CD8-positive, alpha-beta T cell (primary cell): ENCODE measurements at regions of chr1 and their contacts with region 1.

Region 1: DNA sequence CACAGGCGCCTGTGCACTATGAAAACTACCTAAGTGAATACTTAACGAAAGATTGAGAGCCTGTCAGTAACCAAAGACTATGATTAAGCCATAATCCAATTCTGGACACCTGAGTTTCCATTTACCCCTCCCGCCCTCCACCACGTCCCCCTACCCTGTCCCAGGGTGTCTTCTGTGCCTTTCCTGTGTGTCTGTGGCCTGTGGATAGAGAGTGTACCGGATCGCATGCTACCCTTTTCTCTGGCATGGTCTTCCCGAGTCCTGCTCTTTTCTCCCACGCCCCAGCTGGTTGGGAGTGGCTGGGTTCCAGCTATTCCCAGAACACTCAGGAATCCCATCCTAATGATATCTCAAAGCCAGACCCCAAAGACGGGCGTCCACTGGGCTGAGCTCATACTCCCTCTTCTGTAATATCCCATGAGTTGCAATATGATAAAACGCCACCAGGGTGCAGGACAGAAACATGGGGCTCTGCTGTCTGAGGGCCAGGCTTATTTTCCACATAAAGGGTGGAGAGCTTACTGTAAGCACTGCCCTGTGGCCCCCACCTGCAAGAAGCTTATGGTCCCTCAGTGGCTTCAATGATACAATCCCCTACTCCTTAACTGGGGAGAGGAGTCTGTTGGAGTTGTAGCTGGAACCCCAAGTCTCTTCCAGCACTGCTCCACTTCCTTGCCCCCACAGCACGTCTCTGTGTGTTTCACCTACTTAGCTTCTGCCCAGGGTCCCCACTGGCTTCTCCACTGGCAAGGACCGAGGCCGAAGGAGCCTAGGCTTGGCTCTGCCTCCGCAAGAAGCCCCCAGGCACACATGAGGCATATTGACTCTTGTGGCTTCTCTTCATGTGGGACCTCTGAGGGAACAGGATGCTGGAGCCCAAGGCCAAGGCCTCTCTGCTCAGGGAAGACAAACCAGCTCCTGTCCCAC is 17.6 kb upstream of the ALX3 start:
- DNase-seq: peak in 4 of 9 experiments; percentile 34 to 62 (median 54)
- ATAC-seq: peak; percentile 77
- H3K4me3 ChIP-seq: no peak overlapping the region
- H3K4me3 Mint-ChIP-seq: no peak overlapping the region
- H3K27ac ChIP-seq: no peak overlapping the region
- H3K27ac Mint-ChIP-seq: no peak overlapping the region
- H3K4me1 ChIP-seq: peaks cover 8% of the 10 kb centered on the region
- H3K4me1 Mint-ChIP-seq: peaks cover 13% of the 10 kb centered on the region
- H3K27me3 ChIP-seq: peaks cover 7 to 12% of the 10 kb centered on the region in 2 experiments
- H3K27me3 Mint-ChIP-seq: peaks cover 43% of the 10 kb centered on the region
- CTCF ChIP-seq: peak; percentile 68

Region 2: DNA sequence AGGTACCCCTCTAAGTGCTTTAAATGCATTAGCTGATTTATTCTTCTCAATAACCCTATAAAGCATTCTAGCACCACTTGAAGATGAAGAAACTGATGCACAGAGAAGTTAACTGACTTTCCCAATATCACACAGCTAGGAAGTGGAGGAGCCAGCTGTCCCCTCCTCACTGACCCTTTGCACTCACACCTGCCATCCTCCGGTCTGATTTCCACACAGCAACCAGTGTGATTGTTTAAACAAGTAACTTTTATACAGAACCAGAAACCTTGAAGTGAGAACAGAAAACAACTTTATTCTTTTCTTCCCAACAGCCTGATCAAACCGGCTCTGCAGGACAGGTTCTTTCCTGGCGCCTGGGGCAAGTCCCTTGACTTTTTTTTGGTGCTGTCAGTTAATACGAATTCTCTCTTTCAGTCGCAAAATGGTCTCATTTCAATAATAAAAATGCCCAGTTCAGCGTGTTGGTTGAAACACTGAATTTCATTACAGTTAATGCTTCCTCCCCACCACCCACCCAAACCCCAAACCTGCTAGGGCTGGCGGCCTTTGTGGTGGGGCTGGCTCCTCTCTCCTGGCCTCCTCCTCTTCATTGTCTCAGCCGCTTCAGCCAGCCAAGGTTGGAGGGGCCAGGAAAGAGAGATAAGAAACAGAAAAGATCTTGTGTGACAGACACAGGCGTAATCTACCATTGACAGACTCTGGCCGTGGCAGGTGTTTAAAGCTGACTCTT is 1554.6 kb before region 1 on chr1:
- CTCF ChIA-PET with region 1: no interaction called
- POLR2A ChIA-PET with region 1: no interaction called
- intact Hi-C with region 1: no loop called
- DNase-seq: no peak
- ATAC-seq: no peak
- H3K4me3 ChIP-seq: no peak overlapping the region
- H3K4me3 Mint-ChIP-seq: no peak overlapping the region
- H3K27ac ChIP-seq: no peak overlapping the region
- H3K27ac Mint-ChIP-seq: no peak overlapping the region
- H3K4me1 ChIP-seq: no peaks in the 10 kb centered on the region
- H3K4me1 Mint-ChIP-seq: no peaks in the 10 kb centered on the region
- H3K27me3 ChIP-seq: no peaks in the 10 kb centered on the region
- H3K27me3 Mint-ChIP-seq: peaks cover 2% of the 10 kb centered on the region
- CTCF ChIP-seq: no peak

Region 3: GRCh38 chr1:110076789-110077500 is 11.1 kb before region 1 on chr1:
- CTCF ChIA-PET with region 1: interaction called, 11 read pairs
- POLR2A ChIA-PET with region 1: no interaction called
- intact Hi-C with region 1: no loop called
- DNase-seq: no peak
- ATAC-seq: no peak
- H3K4me3 ChIP-seq: no peak overlapping the region
- H3K4me3 Mint-ChIP-seq: no peak overlapping the region
- H3K27ac ChIP-seq: no peak overlapping the region
- H3K27ac Mint-ChIP-seq: no peak overlapping the region
- H3K4me1 ChIP-seq: no peaks in the 10 kb centered on the region
- H3K4me1 Mint-ChIP-seq: no peaks in the 10 kb centered on the region
- H3K27me3 ChIP-seq: peaks cover 0 to 2% of the 10 kb centered on the region in 2 experiments
- H3K27me3 Mint-ChIP-seq: peaks cover 41% of the 10 kb centered on the region
- CTCF ChIP-seq: no peak

Region 4: DNA sequence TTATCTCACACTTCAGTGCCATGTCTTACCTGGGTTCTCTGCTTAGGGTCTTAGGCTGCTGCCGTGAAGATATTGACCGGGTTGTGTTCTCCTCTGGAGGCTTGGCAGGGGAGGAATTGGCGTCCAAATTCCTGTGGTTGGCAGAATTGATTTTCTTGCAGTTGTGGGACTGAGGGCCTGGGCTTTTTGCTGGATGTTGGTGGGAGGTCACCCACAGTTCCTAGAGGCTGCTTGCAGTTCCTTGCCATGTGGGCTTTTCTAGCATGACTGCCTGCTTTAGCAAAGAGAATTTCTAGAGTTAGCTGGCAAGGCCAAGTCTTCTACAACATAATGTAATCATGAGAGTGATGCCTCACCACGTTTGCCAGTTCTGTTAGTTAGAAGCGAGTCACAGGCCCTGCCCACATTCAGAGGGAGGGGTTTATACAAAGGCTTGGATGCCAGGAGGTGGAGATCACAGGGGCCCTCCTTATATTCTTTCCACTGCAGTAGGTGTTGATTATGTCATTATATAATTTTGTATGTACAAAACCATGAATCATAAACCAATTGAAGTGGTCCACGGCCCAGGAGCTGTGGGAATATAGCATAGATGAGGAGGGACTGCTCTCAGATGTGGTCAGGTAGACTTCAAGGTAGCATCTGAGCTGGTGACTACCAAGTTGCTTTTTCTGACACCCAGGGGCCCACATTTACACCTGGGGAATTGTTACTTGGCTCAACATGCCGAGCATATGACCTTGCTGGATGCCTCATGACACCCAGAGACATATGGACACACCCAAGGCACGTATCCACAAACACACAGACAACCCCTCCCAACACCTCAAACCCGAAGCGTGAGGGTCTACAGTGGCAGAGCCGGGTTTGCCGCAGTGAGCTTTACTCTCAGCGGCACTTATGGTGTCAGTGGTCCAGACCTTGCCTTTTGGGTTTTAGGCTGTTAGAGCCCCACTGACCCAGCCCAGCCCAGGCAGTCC is 30.9 kb after region 1 on chr1:
- CTCF ChIA-PET with region 1: interaction called, 8 read pairs
- POLR2A ChIA-PET with region 1: no interaction called
- intact Hi-C with region 1: loop called in 1 of 2 experiments (anchors 1 kb)
- DNase-seq: no peak
- ATAC-seq: no peak
- H3K4me3 ChIP-seq: no peak overlapping the region
- H3K4me3 Mint-ChIP-seq: no peak overlapping the region
- H3K27ac ChIP-seq: no peak overlapping the region
- H3K27ac Mint-ChIP-seq: no peak overlapping the region
- H3K4me1 ChIP-seq: no peaks in the 10 kb centered on the region
- H3K4me1 Mint-ChIP-seq: peaks cover 3% of the 10 kb centered on the region
- H3K27me3 ChIP-seq: peaks cover 0 to 4% of the 10 kb centered on the region in 2 experiments
- H3K27me3 Mint-ChIP-seq: peaks cover 30% of the 10 kb centered on the region
- CTCF ChIP-seq: no peak

Region 5: GRCh38 chr1:110136911-110137310 is 48.8 kb after region 1 on chr1:
- CTCF ChIA-PET with region 1: no interaction called
- POLR2A ChIA-PET with region 1: no interaction called
- intact Hi-C with region 1: no loop called
- DNase-seq: peak in 5 of 9 experiments; percentile 11 to 52 (median 22)
- ATAC-seq: no peak
- H3K4me3 ChIP-seq: no peak overlapping the region
- H3K4me3 Mint-ChIP-seq: no peak overlapping the region
- H3K27ac ChIP-seq: no peak overlapping the region
- H3K27ac Mint-ChIP-seq: no peak overlapping the region
- H3K4me1 ChIP-seq: peaks cover 13% of the 10 kb centered on the region
- H3K4me1 Mint-ChIP-seq: peaks cover 14% of the 10 kb centered on the region
- H3K27me3 ChIP-seq: no peaks in the 10 kb centered on the region
- H3K27me3 Mint-ChIP-seq: peaks cover 39% of the 10 kb centered on the region
- CTCF ChIP-seq: no peak